ENCODE measurements at regions of chr3 and their contacts with region 1.

Region 1: GRCh38 chr3:78765671-78766485 is 1001.9 kb downstream of the ROBO1 start:
- DNase-seq: no peak
- ATAC-seq: no peak
- H3K4me3 ChIP-seq: no peak overlapping the region
- H3K27ac ChIP-seq: no peak overlapping the region
- H3K4me1 ChIP-seq: no peaks in the 10 kb centered on the region
- H3K27me3 ChIP-seq: no peaks in the 10 kb centered on the region
- CTCF ChIP-seq: no peak
- POLR2A ChIP-seq: no peak
- RAD21 ChIP-seq: no peak

Region 2: DNA sequence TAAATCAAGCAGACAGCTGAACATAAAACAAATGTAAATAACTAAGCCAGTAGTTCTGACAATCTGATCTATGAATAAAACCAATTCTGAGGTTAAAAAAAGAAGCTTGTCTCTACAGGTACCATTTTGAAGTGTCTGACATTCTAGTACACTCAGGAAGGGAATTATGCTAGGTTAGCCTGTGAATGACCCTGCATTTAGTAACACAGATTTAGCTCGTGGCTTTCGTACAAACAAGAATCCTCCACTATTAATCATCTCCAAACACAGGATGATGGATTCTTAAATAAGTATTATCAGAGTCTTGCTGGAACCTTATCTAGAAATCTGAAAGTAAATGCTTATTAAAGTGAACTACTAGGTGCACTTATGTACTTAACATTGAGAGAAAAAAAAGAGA is 118.2 kb before region 1 on chr3:
- CTCF ChIA-PET with region 1: no interaction called
- POLR2A ChIA-PET with region 1: no interaction called
- dilution Hi-C with region 1: no loop called
- in situ Hi-C with region 1: no loop called
- intact Hi-C with region 1: no loop called
- DNase-seq: peak; percentile 36
- ATAC-seq: peak; percentile 65
- H3K4me3 ChIP-seq: no peak overlapping the region
- H3K27ac ChIP-seq: no peak overlapping the region
- H3K4me1 ChIP-seq: peaks cover 2% of the 10 kb centered on the region; the same call in 1 of the 2 replicates
- H3K27me3 ChIP-seq: no peaks in the 10 kb centered on the region
- CTCF ChIP-seq: no peak
- POLR2A ChIP-seq: no peak
- RAD21 ChIP-seq: no peak

Region 3: DNA sequence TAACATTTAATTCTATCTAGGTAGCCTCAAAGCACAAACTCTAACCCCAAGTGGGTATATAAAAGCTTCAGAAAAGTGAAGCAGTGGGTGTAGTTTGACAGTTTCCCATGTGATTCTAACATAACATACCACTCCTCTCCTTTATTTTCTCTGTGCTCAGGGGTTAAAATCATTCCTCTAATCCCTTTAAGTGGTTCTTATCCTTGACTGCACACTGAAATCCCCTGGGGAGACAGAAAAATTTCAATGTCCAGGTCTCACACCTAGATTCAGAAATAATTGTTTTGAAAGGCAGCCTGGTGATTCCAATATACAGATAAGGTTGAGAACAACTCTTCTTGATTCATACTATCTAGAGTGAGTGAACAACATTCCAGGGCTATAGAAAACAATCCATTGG is 15.5 kb after region 1 on chr3:
- CTCF ChIA-PET with region 1: no interaction called
- POLR2A ChIA-PET with region 1: no interaction called
- dilution Hi-C with region 1: no loop called
- in situ Hi-C with region 1: no loop called
- intact Hi-C with region 1: loop called (anchors 1 kb)
- DNase-seq: no peak
- ATAC-seq: no peak
- H3K4me3 ChIP-seq: no peak overlapping the region
- H3K27ac ChIP-seq: no peak overlapping the region
- H3K4me1 ChIP-seq: no peaks in the 10 kb centered on the region
- H3K27me3 ChIP-seq: no peaks in the 10 kb centered on the region
- CTCF ChIP-seq: no peak
- POLR2A ChIP-seq: no peak
- RAD21 ChIP-seq: no peak

Region 4: DNA sequence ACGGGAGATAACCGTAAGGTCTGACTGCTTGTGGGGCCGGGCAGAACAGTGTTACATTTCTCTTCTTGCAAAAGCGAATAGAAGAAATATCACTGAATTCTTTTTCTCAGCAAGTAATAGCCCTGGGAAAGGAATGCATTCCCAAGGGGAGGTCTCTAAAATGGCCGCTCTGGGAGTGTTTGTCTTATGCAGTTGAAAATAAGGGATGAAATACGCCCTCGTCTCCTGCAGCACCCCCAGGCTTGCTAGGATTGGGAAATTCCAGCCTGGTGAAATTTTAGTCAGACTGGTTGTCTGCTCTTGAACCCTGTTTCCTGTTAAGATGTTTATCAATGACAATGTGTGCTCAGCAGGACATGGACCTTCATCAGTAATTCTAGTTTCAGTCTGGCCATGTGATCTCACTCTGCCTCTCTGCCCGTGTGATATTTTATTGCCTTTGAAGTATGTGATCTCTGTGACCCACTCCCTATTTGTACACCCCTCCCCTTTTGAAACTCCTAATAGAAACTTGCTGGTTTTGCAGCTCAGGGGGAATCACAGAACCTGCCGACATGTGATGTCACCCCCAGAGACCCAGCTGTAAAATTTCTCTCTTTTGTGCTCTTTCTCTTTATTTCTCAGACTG is 286.3 kb after region 1 on chr3:
- CTCF ChIA-PET with region 1: no interaction called
- POLR2A ChIA-PET with region 1: no interaction called
- dilution Hi-C with region 1: no loop called
- in situ Hi-C with region 1: no loop called
- intact Hi-C with region 1: no loop called
- DNase-seq: no peak
- ATAC-seq: no peak
- H3K4me3 ChIP-seq: no peak overlapping the region
- H3K27ac ChIP-seq: no peak overlapping the region
- H3K4me1 ChIP-seq: no peaks in the 10 kb centered on the region
- H3K27me3 ChIP-seq: no peaks in the 10 kb centered on the region; the same call in 1 of the 2 replicates
- CTCF ChIP-seq: no peak
- POLR2A ChIP-seq: no peak
- RAD21 ChIP-seq: no peak